Motor neuron (in vitro differentiated cells): ENCODE measurements at regions of chr9 and their contacts with region 1.

Region 1: DNA sequence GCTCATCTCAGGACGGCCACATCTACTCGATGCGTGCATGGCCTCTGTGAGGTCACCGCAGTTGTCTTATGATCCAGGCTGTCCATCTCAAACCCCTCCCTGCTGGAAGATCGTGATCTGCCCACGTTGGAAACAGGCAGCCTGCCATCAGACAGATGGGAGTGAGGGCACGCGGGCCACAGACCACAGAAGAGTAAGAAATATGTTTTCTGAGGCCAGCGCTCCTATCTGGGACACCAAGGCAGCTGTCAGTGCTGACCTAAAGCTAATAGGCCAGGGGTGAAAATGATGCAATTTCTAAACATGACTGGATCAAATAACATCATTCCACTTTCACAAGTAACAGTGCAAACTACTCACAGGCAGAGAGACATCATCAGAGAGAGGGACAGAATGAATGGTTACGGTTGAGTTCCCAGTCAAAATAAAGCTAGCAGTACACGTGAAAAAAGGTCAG is 57.1 kb upstream of the CER1 start:
- ATAC-seq: peak in 5 of 8 experiments; percentile 64 to 96 (median 95)
- H3K4me3 ChIP-seq: no peak overlapping the region
- H3K27ac ChIP-seq: no peak overlapping the region
- H3K4me1 ChIP-seq: no peaks in the 10 kb centered on the region

Region 2: GRCh38 chr9:14608540-14608939 is 171.1 kb before region 1 on chr9:
- in situ Hi-C with region 1: loop called in 2 of 9 experiments (anchors 10 to 25 kb)
- ATAC-seq: peak in 2 of 8 experiments; percentile 36 to 63
- H3K4me3 ChIP-seq: no peak overlapping the region
- H3K27ac ChIP-seq: no peak overlapping the region
- H3K4me1 ChIP-seq: no peaks in the 10 kb centered on the region